ENCODE measurements at regions of chr1 and their contacts with region 1.

Region 1: GRCh38 chr1:168225476-168226190 is at the start of gene SFT2D2:
- DNase-seq: peak; percentile 90
- total RNA-seq, gene SFT2D2: 20.4 TPM

Region 2: DNA sequence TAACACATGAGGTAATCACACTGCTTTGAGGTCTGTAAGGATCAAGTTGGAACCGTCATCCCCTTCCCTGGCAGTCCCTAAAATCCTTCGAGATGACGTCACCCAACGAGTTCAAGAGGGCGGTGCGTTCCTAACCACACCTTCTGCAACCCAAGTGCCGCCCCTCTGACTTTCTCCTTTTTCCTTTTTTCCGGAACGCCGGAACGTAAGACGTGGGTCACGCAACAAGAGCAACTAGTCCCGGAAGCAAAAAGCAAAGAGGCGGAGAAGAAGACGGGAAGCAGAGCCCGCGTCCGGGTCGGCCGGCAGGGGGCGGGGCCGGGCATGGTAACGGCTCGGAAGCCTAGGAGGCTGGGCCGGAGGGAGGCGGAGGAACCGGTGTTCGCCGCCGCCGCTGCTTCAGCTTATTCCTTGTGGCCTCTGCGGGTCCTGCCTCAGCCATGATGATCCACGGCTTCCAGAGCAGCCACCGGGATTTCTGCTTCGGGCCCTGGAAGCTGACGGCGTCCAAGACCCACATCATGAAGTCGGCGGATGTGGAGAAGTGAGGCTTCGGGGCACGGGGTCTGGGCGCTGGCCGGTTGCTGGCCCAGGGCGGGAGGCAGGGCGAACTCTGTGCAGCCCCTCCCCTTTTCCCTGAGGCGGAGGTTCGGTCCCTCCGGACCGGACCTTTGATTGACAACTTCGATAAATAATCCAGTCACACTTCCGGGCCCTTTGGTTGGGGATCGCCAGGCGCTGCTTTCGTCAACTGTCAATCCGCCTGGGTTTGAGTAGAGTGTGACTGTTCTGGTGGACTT is 46.8 kb before region 1 on chr1 and contains the start of gene TIPRL:
- intact Hi-C with region 1: loop called (anchors 2 kb)
- DNase-seq: peak; percentile 98
- total RNA-seq, gene TIPRL: 30.4 TPM